Naive thymus-derived CD4-positive, alpha-beta T cell (primary cell): ENCODE measurements at regions of chr3 and their contacts with region 1.

Region 1: DNA sequence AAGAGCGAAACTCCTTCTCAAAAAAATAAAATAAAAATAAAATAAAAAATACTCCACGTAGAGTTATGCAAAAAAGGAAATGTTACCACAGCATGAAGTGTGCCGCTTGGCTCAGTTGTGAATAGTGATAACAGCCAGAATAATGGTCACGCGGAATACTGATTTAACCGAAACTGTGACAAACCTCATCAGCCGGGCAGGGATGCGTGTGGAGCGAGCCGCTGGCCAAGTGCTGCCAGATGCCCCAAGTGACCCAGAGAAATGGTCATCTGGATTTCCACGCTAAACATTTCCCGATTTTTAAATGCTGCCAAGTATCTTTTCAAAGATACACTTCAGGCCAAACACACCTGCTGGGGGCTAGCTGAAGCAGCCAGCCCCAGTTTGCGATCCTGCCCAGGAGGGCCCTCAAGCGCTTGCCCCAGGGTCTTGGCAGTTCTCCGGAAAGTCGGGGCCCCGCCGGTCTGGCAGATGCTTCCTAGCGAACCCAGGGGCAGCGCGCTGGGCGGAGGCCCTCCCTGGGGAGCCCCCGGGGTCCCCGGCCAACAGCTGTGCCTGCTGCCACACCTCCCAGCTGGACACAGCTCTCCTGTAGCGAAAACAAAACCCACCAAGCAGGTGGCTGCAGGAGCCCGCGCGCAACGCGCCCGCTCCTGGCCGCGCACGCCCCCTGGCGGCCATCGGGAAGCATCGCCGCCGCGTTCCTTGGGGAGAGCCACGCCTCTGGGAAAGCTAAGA is 35.1 kb downstream of the CMTM6 start:
- DNase-seq: peak; percentile 59 to 89 (median 78)
- ATAC-seq: peak; percentile 94
- H3K4me3 ChIP-seq: peak overlapping the region; percentile 66
- H3K4me3 Mint-ChIP-seq: peak overlapping the region; percentile 39 to 81 (median 68)
- H3K27ac ChIP-seq: peak overlapping the region; percentile 81
- H3K27ac Mint-ChIP-seq: peak overlapping the region in 7 of 9 donors; percentile 25 to 93 (median 85)
- H3K4me1 ChIP-seq: peaks cover 14 to 25% of the 10 kb centered on the region in 2 donors
- H3K4me1 Mint-ChIP-seq: peaks cover 19 to 62% (median 49%) of the 10 kb centered on the region in 7 donors
- H3K27me3 ChIP-seq: no peaks in the 10 kb centered on the region
- H3K27me3 Mint-ChIP-seq: no peaks in the 10 kb centered on the region

Region 2: DNA sequence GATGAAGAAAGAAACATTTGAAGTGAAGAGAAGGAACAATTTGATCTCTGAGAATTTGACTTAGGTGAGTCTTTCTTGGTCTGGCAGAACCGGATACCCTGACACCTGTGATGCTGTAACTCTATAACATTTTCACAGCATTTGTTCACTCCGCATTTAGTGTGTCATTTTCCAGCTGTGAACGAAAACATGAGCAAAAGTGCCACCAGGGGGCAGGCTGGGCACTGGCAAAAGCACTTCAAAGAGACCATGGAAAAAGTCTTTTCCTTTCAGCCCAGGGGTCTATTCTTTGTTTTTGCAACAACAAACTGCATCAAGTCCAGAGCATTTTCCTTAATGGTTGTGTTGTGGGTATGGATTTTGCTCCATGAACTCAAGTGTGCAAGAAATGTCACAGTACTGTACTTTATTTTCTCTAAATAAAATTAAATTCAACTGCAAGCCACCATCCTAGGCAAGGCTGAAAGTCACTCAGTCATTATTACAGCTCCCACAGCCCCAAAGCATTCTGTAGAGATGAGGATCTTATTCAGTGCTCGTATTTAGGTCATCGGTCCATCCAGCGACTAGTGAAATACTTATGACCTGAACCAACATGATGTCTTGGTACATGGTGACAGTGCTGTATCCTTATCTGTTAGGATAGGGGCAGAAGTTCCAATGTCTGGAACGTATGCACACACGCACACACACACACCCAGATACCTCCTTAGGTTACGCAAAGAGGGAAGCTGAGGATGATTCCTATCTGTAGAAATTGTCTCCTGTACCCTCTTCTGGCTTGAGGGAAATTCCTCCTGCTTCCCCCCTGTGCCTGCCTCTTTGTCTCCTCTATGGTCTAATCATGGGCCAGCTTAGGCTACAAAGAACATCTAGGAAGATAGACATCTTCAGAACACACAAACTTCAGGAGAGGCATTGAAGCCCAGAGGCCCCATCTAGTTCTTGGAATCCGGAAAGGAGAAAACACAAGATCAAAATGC is 1698.5 kb before region 1 on chr3:
- CTCF ChIA-PET with region 1: no interaction called
- POLR2A ChIA-PET with region 1: no interaction called
- intact Hi-C with region 1: no loop called
- DNase-seq: peak; percentile 39 to 69 (median 62)
- ATAC-seq: peak; percentile 48
- H3K4me3 ChIP-seq: no peak overlapping the region
- H3K4me3 Mint-ChIP-seq: peak overlapping the region in 1 of 10 donors; percentile 35
- H3K27ac ChIP-seq: no peak overlapping the region
- H3K27ac Mint-ChIP-seq: no peak overlapping the region
- H3K4me1 ChIP-seq: no peaks in the 10 kb centered on the region
- H3K4me1 Mint-ChIP-seq: peaks cover 0 to 7% (median 0%) of the 10 kb centered on the region in 7 donors
- H3K27me3 ChIP-seq: no peaks in the 10 kb centered on the region
- H3K27me3 Mint-ChIP-seq: peaks cover 0 to 32% (median 3%) of the 10 kb centered on the region in 5 donors

Region 3: DNA sequence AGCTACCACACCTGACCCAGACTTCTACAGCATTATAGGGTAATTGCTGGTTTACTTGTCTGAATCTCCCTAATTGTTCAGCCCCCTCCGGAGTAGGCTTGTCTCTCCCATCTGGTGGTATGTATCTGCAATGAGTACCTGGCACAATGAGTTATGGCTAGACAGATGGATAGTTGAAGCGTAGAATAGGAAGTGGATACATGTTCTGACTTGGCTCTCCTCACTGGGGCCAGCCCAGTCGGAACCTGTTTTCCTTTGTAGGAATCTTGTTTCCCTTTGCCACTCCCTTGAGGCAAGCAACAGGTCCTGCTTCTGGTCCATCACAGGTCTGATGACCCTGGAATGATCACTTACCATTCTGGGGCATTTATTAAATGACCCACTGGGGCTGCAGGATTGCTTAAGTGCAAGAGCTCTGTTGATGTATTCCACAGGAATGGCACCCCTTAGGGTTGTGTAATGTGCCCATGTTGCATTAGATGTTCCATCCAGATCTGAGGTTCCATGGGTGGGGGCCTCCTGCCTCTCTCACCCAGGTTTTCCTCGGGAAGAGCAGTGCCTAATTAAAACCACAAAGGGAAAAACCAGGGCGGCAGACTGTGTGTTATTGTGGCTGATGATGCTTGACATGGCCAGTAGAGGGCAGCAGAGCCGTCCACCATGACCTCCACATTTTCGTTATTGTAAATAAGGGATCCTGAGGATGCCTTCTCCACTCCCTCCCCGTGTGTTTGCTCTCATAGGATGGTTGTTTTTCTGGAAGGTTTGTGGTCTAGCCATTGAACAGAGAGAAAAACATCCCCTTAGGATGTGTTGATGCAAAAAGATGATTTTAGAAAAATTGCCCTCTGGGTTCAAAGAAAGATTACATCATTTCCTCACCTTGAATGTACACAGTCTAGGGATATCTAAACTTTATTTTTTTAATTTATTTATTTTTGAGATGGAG is 171.0 kb before region 1 on chr3:
- CTCF ChIA-PET with region 1: interaction called, 8 read pairs
- POLR2A ChIA-PET with region 1: no interaction called
- intact Hi-C with region 1: loop called (anchors 1 to 2 kb)
- DNase-seq: peak; percentile 35 to 73 (median 62)
- ATAC-seq: peak; percentile 89
- H3K4me3 ChIP-seq: no peak overlapping the region
- H3K4me3 Mint-ChIP-seq: peak overlapping the region; percentile 60 to 80 (median 72)
- H3K27ac ChIP-seq: peak overlapping the region; percentile 53
- H3K27ac Mint-ChIP-seq: peak overlapping the region; percentile 89 to 99 (median 95)
- H3K4me1 ChIP-seq: peaks cover 15 to 18% of the 10 kb centered on the region in 2 donors
- H3K4me1 Mint-ChIP-seq: peaks cover 21 to 65% (median 39%) of the 10 kb centered on the region in 7 donors
- H3K27me3 ChIP-seq: no peaks in the 10 kb centered on the region
- H3K27me3 Mint-ChIP-seq: no peaks in the 10 kb centered on the region

Region 4: DNA sequence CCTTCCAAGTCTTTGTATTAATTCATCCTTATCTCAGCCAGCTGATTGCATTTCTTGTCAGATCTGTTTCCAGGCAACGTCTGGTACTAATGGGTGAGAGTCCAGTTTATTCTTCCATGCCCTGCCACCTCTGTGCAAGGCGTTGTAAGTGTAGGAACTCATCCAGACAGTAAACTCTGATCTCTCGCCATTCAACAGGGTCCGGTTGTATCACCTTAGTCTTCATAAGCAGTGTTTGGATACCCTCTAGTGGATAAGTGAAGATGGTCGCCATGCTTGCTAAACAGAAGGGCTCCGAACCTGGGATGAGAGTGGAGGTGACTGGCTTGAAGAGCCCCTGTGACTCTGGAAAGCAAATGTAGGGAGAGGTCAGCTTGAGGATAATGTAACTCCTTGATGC is 127.5 kb before region 1 on chr3:
- CTCF ChIA-PET with region 1: interaction called, 4 read pairs
- POLR2A ChIA-PET with region 1: no interaction called
- intact Hi-C with region 1: loop called in 1 of 2 experiments (anchors 1 kb)
- DNase-seq: peak in 7 of 9 donors; percentile 31 to 65 (median 56)
- ATAC-seq: peak; percentile 77
- H3K4me3 ChIP-seq: no peak overlapping the region
- H3K4me3 Mint-ChIP-seq: no peak overlapping the region
- H3K27ac ChIP-seq: no peak overlapping the region
- H3K27ac Mint-ChIP-seq: no peak overlapping the region
- H3K4me1 ChIP-seq: peaks cover 0 to 18% of the 10 kb centered on the region in 2 donors
- H3K4me1 Mint-ChIP-seq: peaks cover 18 to 30% (median 27%) of the 10 kb centered on the region in 7 donors
- H3K27me3 ChIP-seq: no peaks in the 10 kb centered on the region
- H3K27me3 Mint-ChIP-seq: no peaks in the 10 kb centered on the region

Region 5: GRCh38 chr3:32420126-32421038 is 47.1 kb before region 1 on chr3:
- CTCF ChIA-PET with region 1: interaction called, 17 read pairs
- POLR2A ChIA-PET with region 1: interaction called, 304 read pairs
- intact Hi-C with region 1: no loop called
- DNase-seq: peak in 1 of 9 donors; percentile 37
- ATAC-seq: peak; percentile 39
- H3K4me3 ChIP-seq: no peak overlapping the region
- H3K4me3 Mint-ChIP-seq: peak overlapping the region; percentile 58 to 84 (median 76)
- H3K27ac ChIP-seq: peak overlapping the region; percentile 68
- H3K27ac Mint-ChIP-seq: peak overlapping the region; percentile 76 to 99 (median 94)
- H3K4me1 ChIP-seq: peaks cover 30 to 91% of the 10 kb centered on the region in 2 donors
- H3K4me1 Mint-ChIP-seq: peaks cover 69 to 100% (median 97%) of the 10 kb centered on the region in 7 donors
- H3K27me3 ChIP-seq: no peaks in the 10 kb centered on the region
- H3K27me3 Mint-ChIP-seq: no peaks in the 10 kb centered on the region

Region 6: GRCh38 chr3:32453346-32453745 is 14.2 kb before region 1 on chr3:
- CTCF ChIA-PET with region 1: interaction called, 19 read pairs
- POLR2A ChIA-PET with region 1: interaction called, 6 read pairs
- intact Hi-C with region 1: loop called in 1 of 2 experiments (anchors 1 kb)
- DNase-seq: no peak
- ATAC-seq: no peak
- H3K4me3 ChIP-seq: no peak overlapping the region
- H3K4me3 Mint-ChIP-seq: peak overlapping the region in 1 of 10 donors; percentile 9
- H3K27ac ChIP-seq: peak overlapping the region; percentile 54
- H3K27ac Mint-ChIP-seq: peak overlapping the region in 5 of 9 donors; percentile 59 to 100 (median 88)
- H3K4me1 ChIP-seq: peaks cover 32 to 44% of the 10 kb centered on the region in 2 donors
- H3K4me1 Mint-ChIP-seq: peaks cover 28 to 76% (median 62%) of the 10 kb centered on the region in 7 donors
- H3K27me3 ChIP-seq: no peaks in the 10 kb centered on the region
- H3K27me3 Mint-ChIP-seq: no peaks in the 10 kb centered on the region

Region 7: GRCh38 chr3:32502118-32502945 is 34.8 kb after region 1 on chr3 and contains the start of gene CMTM6:
- CTCF ChIA-PET with region 1: interaction called, 3 read pairs
- POLR2A ChIA-PET with region 1: no interaction called
- intact Hi-C with region 1: loop called in 1 of 2 experiments (anchors 2 kb)
- DNase-seq: peak; percentile 49 to 77 (median 70)
- ATAC-seq: peak; percentile 92
- H3K4me3 ChIP-seq: peak within 1 kb of the TSS; percentile 89
- H3K4me3 Mint-ChIP-seq: peak within 1 kb of the TSS; percentile 79 to 97 (median 93)
- H3K27ac ChIP-seq: peak within 1 kb of the TSS; percentile 98
- H3K27ac Mint-ChIP-seq: peak within 1 kb of the TSS; percentile 86 to 98 (median 90)
- H3K4me1 ChIP-seq: peaks cover 6 to 23% of the 10 kb centered on the region in 2 donors
- H3K4me1 Mint-ChIP-seq: peaks cover 28 to 48% (median 43%) of the 10 kb centered on the region in 7 donors
- H3K27me3 ChIP-seq: no peaks in the 10 kb centered on the region
- H3K27me3 Mint-ChIP-seq: peaks cover 0 to 4% (median 0%) of the 10 kb centered on the region in 5 donors
- total RNA-seq, gene CMTM6: 24.1 to 61.1 (median 38.1) TPM